Activated CD8-positive, alpha-beta T cell treated with anti-CD3 and anti-CD28 coated beads for 36 hours (primary cell): ENCODE measurements at regions of chr2 and their contacts with region 1.

Region 1: DNA sequence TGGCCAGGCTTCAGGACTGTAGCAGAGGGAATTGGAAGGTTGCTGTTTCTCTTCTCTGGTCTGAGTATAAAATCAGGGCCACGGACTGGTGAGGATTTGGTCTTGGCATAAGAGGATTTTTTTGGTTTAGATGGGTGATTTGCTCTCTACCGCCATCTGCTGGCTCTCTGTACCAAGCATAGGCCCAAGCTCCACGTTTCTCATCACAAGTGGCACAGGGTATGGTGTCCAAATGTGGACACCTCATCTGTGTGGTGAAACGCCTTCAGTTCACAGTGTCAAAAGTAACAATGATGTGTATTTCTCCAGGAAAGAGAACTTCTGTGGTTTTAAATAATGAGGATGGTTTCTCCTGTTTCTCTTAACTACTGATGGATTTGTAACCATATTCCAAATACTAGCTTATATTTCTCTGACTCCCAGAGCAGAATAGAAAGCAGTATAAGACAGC is 115.1 kb downstream of the EML6 start:
- DNase-seq: peak; percentile 77
- ATAC-seq: peak; percentile 92
- H3K4me3 Mint-ChIP-seq: no peak overlapping the region
- H3K27ac Mint-ChIP-seq: no peak overlapping the region
- H3K4me1 Mint-ChIP-seq: no peaks in the 10 kb centered on the region
- H3K27me3 Mint-ChIP-seq: no peaks in the 10 kb centered on the region
- CTCF ChIP-seq: peak; percentile 96

Region 2: DNA sequence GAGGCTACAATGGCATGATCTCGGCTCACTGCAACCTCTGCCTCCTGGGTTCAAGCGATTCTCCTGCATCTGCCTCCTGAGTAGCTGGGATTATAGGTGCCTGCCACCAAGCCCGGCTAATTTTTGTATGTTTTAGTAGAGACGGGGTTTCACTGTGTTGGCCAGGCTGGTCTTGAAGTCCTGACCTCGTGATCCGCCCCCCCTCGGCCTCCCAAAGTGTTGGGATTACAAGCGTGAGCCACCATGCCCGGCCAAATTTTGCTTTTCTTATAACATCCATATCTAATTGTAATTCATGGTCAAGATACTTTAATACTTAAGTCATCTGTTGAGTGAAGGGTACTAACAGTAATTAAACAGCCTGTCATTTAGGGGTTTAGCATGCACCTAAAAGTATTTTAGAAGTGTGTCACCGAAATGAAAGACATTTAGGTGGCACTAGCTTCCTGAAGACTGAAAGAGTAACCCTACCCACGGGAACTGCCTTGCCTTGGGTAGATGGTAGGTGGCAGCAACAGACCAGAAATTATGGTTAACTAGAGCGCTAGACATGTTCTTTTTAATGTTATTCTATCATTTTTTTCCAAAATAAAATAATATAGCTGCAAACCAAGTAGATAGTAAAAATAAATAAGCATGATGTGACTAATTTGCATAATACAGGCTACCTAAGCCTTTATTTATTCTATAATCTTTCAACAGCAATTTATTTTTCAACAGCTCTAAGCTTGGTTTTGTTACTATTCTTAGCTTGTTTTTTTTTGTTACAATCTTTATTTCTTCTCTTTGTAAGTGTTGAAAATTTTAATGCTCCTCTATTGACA is 731.8 kb before region 1 on chr2:
- CTCF ChIA-PET with region 1: interaction called, 17 read pairs
- POLR2A ChIA-PET with region 1: no interaction called
- intact Hi-C with region 1: no loop called
- DNase-seq: peak; percentile 64
- ATAC-seq: peak; percentile 69
- H3K4me3 Mint-ChIP-seq: no peak overlapping the region
- H3K27ac Mint-ChIP-seq: no peak overlapping the region
- H3K4me1 Mint-ChIP-seq: peaks cover 7% of the 10 kb centered on the region
- H3K27me3 Mint-ChIP-seq: peaks cover 2% of the 10 kb centered on the region
- CTCF ChIP-seq: peak; percentile 68

Region 3: DNA sequence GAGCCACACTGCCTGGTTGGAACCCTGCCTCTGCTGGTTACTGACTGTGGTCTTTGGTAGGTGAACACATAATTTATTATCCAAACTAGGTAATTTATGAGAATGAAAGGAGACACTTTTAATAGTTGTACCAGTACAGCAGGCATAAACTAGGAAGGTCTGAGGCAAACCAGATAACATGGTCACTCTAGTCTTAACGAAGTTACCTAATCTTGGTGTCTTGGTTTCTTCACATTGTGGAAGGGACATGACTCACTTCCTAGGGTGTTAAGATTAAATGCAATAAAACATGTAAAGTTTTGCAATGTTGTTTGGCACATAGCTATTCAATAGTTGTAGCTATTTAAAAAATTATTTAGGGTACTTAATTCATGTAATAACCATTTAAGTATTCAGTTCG is 359.2 kb before region 1 on chr2:
- CTCF ChIA-PET with region 1: no interaction called
- POLR2A ChIA-PET with region 1: no interaction called
- intact Hi-C with region 1: no loop called
- DNase-seq: no peak
- ATAC-seq: no peak
- H3K4me3 Mint-ChIP-seq: no peak overlapping the region
- H3K27ac Mint-ChIP-seq: no peak overlapping the region
- H3K4me1 Mint-ChIP-seq: no peaks in the 10 kb centered on the region
- H3K27me3 Mint-ChIP-seq: no peaks in the 10 kb centered on the region
- CTCF ChIP-seq: no peak

Region 4: GRCh38 chr2:54723131-54723995 is 115.2 kb before region 1 on chr2 and contains the start of gene EML6:
- CTCF ChIA-PET with region 1: interaction called, 9 read pairs
- POLR2A ChIA-PET with region 1: no interaction called
- intact Hi-C with region 1: loop called (anchors 5 kb)
- DNase-seq: peak; percentile 99
- ATAC-seq: peak; percentile 99
- H3K4me3 Mint-ChIP-seq: peak within 1 kb of the TSS; percentile 82
- H3K27ac Mint-ChIP-seq: peak within 1 kb of the TSS; percentile 70
- H3K4me1 Mint-ChIP-seq: peaks cover 15% of the 10 kb centered on the region
- H3K27me3 Mint-ChIP-seq: peaks cover 33% of the 10 kb centered on the region
- CTCF ChIP-seq: peak; percentile 28
- total RNA-seq, gene EML6: 1.2 to 1.7 TPM

Region 5: DNA sequence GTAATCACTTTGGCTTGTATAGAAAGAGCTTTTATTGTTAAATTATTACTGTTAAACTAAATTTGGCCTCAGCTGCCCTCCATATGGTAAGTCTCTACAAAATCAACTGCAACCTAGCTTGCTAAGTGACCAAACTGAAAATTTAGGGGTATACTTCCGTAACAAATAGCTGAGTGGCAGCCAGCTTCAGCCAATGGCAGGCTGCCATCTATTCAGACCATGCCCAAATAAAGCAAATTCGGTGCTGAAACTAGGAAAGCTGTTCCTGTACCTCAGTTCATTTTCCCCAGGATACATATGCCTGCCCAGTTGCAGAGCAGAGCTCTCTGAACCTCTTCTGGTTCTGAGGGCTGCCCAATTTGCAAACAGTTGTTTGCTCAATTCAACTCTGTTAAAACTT is 20.4 kb before region 1 on chr2:
- CTCF ChIA-PET with region 1: interaction called, 12 read pairs
- POLR2A ChIA-PET with region 1: no interaction called
- intact Hi-C with region 1: no loop called
- DNase-seq: no peak
- ATAC-seq: no peak
- H3K4me3 Mint-ChIP-seq: no peak overlapping the region
- H3K27ac Mint-ChIP-seq: no peak overlapping the region
- H3K4me1 Mint-ChIP-seq: no peaks in the 10 kb centered on the region
- H3K27me3 Mint-ChIP-seq: peaks cover 4% of the 10 kb centered on the region
- CTCF ChIP-seq: no peak

Region 6: GRCh38 chr2:54899576-54900200 is 61.1 kb after region 1 on chr2:
- CTCF ChIA-PET with region 1: interaction called, 14 read pairs
- POLR2A ChIA-PET with region 1: no interaction called
- intact Hi-C with region 1: no loop called
- DNase-seq: no peak
- ATAC-seq: no peak
- H3K4me3 Mint-ChIP-seq: no peak overlapping the region
- H3K27ac Mint-ChIP-seq: no peak overlapping the region
- H3K4me1 Mint-ChIP-seq: peaks cover 17% of the 10 kb centered on the region
- H3K27me3 Mint-ChIP-seq: no peaks in the 10 kb centered on the region
- CTCF ChIP-seq: peak; percentile 48

Region 7: DNA sequence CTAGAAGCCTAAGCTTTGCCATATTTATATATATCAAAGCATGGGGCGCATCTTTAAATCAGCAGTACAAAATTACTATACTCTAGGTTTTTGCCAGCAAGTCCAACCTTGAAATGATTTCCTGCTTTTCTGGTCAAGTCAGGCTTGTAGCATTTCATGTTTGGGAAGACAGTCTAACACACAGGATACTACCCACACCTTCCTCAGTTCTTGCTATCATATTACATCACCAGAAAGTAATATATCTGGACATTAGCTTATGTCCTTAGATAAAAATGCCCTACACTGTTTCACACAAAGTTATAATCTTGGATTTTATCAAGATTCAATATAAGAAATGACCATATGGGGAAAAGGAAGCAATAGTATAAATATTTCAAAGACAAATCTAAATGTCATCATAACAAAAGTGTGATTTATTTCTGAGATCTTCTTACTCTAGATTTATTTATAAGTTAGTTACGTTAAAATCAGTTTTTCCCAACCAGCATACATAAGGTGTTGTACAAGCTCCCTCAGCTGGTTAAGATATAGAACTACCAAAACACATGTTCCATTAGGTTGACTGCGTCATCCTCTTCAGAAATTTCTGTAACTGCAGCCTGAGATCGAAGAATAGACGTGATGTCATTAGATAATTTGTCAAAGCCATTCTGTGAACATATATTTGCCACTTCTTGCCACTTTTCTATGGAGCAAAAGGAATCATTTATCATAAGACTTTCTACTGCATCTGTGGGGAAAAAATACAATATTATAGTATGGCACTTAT is 336.8 kb after region 1 on chr2:
- CTCF ChIA-PET with region 1: interaction called, 24 read pairs
- POLR2A ChIA-PET with region 1: no interaction called
- intact Hi-C with region 1: no loop called
- DNase-seq: no peak
- ATAC-seq: peak; percentile 88
- H3K4me3 Mint-ChIP-seq: no peak overlapping the region
- H3K27ac Mint-ChIP-seq: no peak overlapping the region
- H3K4me1 Mint-ChIP-seq: peaks cover 8% of the 10 kb centered on the region
- H3K27me3 Mint-ChIP-seq: no peaks in the 10 kb centered on the region
- CTCF ChIP-seq: peak; percentile 71